ENCODE measurements at regions of chr14 and their contacts with region 1.

Region 1: DNA sequence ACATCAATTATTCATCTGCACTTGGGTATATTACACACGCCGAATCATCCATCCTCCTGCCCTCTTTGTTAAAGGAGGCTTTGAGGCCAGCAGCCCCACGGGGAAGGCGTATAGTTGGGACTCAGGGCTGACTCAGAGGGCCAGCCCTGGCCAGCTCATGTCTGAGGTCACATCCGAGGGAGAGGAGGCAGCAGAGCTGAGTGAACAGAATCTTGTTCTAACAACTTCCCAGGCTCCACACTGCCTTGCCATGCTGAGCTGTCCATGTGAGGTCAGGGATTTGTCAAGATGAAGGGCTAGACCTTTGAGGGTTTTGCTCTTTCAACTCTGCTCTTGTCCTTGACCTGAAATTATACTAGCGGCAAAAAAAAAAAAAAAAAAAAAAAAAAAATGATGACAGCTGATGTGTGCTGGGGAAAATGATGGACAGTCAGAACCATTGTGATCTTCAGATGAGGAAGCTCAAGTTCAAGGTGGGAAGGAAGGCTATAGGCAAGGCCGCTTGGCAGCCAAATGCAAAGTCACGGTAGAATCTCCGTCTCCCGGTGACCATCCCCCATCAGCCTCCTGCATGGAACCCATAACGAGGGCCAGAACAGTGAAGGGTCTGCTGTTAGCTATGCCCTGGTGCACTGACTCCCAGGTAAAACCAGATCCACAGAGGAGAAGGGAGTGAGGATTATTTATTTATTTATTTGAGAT is 12.5 kb upstream of the MARK3 start:
- DNase-seq: peak; percentile 71
- H3K4me3 ChIP-seq: no peak overlapping the region
- H3K27me3 ChIP-seq: no peaks in the 10 kb centered on the region
- CTCF ChIP-seq: no peak

Region 2: DNA sequence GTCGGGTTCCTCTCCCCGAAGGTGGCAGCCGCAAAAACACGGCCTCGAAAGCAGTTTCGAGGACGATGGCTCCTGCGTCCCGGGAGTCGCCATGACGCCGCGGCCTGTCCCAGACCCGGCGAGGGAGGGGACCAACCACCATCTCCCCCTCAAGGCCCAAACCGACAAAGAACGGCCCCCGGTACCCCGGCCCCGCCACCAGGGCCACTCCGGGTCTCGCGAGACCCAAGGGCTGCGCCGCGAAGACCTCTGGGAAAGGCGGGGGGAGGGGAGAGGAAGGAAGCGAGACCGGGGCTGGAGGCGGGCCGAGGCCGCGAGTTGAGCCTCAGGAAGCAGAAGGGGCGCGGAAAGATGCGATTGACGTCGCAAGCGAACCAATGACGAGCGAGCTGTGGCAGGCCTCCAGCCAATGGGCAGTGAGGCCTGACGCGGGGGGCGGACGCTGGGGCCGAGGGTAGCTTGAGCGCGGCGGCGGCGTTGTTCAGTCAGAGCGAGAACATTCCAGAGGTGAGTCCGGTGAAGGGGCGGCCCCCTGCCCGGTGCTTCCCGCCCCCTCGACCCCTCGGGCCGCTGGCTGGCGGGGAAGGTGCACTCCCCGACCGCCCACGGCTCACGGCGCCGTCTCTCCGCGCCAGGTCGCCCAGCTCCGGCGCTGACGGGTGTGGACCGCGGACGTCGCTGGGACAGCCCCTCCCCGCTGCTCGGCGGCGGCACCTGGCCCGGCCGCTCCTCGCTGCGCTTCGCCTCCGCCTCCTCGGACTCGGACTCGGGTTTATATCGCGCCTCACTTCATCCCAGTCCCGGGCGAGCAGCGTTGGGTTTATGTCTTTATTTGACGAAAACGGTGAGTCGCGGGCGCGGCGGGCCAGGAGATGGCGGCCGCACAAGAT is 38.8 kb before region 1 on chr14 and contains the start of gene EIF5:
- CTCF ChIA-PET with region 1: no interaction called
- POLR2A ChIA-PET with region 1: no interaction called
- DNase-seq: peak; percentile 85
- H3K4me3 ChIP-seq: peak within 1 kb of the TSS; percentile 84
- H3K27me3 ChIP-seq: no peaks in the 10 kb centered on the region
- CTCF ChIP-seq: peak; percentile 28; the same call in 1 of the 2 replicates
- polyA plus RNA-seq, gene EIF5: 282 and 340 TPM in 2 replicates

Region 3: DNA sequence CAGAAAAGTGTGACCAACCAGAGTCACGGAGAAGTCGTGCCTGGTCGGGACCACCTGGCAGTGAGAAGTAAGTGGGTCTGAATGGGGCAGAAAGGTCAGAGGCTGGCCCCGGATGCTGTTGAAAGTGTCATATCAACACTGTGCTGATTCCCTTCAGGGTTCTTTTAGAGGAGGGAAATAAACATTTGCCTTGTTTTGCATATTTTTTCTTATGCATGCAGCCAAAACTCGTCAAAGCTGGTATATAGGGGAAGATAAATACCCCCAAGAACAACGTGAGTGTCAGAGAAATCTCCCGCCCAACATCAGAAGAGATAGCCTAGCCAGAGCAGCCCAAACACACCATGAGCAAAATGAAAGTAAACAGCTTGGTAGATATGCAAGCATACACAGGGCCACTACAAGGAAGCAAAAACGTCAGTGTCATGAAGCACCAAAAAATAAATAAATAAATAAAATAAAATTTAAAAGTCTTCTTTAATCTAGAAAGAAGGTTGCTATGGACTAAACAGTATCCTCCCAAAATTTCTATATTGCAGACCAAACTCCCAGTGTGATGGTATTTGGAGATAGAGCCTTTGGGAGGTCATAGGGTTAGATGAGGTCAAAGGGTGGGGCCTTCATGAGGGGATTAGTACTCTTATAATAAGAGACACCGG is 16.6 kb before region 1 on chr14:
- CTCF ChIA-PET with region 1: no interaction called
- POLR2A ChIA-PET with region 1: interaction called, 23 read pairs
- DNase-seq: no peak
- H3K4me3 ChIP-seq: no peak overlapping the region
- H3K27me3 ChIP-seq: no peaks in the 10 kb centered on the region
- CTCF ChIP-seq: no peak